ENCODE measurements at regions of chr2 and their contacts with region 1.

Region 1: DNA sequence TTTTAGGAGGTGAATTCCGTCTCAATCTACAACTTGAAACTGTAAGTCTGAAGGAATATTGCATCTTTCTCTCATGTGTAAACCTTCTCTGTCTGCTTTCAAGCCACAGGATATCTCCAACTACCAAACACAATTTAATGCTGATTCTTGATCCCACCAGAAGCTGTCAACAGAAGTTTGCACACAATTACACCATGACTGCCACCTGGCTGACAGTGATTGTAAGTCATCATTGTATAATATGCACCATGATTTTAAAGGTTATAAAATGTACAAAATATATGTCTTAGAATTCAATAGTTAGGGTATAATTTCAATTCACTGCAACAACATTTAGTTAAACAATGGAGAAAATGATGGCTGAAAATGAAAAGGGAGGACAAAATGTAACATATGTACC is 18.4 kb downstream of the PREPL start:
- DNase-seq: peak; percentile 55
- ATAC-seq: peak; percentile 49; the same call in 1 of the 2 replicates
- H3K4me3 ChIP-seq: no peak overlapping the region
- H3K27ac ChIP-seq: no peak overlapping the region
- H3K4me1 ChIP-seq: no peaks in the 10 kb centered on the region
- H3K27me3 ChIP-seq: no peaks in the 10 kb centered on the region
- CTCF ChIP-seq: peak; percentile 74

Region 2: GRCh38 chr2:43950383-43951008 is 392.4 kb before region 1 on chr2:
- CTCF ChIA-PET with region 1: no interaction called
- POLR2A ChIA-PET with region 1: no interaction called
- intact Hi-C with region 1: loop called (anchors 10 kb)
- DNase-seq: peak; percentile 69
- ATAC-seq: peak; percentile 82
- H3K4me3 ChIP-seq: no peak overlapping the region
- H3K27ac ChIP-seq: no peak overlapping the region
- H3K4me1 ChIP-seq: no peaks in the 10 kb centered on the region
- H3K27me3 ChIP-seq: no peaks in the 10 kb centered on the region
- CTCF ChIP-seq: peak; percentile 67

Region 3: GRCh38 chr2:44244129-44244871 is 98.6 kb before region 1 on chr2:
- CTCF ChIA-PET with region 1: interaction called, 5 read pairs
- POLR2A ChIA-PET with region 1: no interaction called
- intact Hi-C with region 1: loop called (anchors 1 kb)
- DNase-seq: peak; percentile 79
- ATAC-seq: peak; percentile 49
- H3K4me3 ChIP-seq: peak overlapping the region; percentile 78
- H3K27ac ChIP-seq: peak overlapping the region; percentile 8; the same call in 1 of the 2 replicates
- H3K4me1 ChIP-seq: peaks cover 21% of the 10 kb centered on the region
- H3K27me3 ChIP-seq: no peaks in the 10 kb centered on the region
- CTCF ChIP-seq: peak; percentile 50

Measured in PC-3 (cell line).